ENCODE measurements at regions of chr11 and their contacts with region 1.

Region 1: DNA sequence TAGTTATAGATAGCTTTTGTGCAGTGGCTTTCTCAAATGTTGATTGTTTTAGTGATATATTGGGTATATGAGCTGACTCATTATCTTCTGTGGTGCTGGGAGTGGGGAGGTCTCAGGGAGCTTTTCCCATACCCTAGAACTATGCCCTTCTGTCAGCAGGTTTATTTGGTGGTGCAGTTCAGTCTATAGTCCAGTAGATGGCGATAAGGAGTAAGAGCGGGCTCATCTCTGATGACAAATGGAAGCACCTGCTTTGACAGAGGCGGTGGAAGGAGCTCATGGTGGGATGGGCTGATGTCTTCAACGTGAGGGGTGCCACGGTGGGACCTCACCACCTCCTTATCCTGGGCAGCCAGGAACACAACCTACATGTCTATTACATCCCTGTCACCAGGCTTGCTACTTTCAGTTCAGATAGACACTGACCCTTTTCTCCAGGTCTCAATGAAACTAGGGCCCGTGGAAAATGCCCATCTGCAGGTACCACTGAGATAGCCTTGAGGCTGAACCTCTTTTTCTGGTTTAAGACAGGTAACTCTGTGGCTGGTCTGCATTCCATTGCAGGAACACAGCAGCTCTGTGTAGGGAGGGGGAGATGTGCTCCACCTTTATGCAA is 13.0 kb upstream of the OR6A2 start:
- DNase-seq: peak; percentile 28
- H3K4me3 ChIP-seq: no peak overlapping the region
- H3K27ac ChIP-seq: no peak overlapping the region
- H3K4me1 ChIP-seq: no peaks in the 10 kb centered on the region
- H3K27me3 ChIP-seq: no peaks in the 10 kb centered on the region
- CTCF ChIP-seq: peak; percentile 91 to 92

Region 2: DNA sequence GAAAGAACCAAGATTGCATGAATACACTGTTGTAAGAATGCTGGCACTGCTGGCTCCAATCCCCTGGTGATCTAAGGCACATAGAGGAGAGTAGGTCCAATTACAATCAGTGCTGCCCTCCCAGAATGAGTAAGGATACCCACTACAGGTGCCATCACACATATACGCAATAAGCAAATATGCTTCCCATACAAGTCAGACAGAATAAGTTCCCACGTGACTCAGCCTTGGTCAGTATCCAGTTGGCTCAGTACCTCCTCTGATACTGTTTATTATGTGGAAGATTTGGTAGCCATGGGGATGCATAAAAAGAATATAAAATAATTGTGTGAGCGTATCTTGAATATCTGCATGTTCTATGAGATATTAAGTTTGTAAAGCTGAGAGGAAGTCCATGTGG is 99.5 kb after region 1 on chr11:
- CTCF ChIA-PET with region 1: no interaction called
- dilution Hi-C with region 1: no loop called
- in situ Hi-C with region 1: no loop called
- intact Hi-C with region 1: no loop called
- DNase-seq: peak; percentile 37
- H3K4me3 ChIP-seq: no peak overlapping the region
- H3K27ac ChIP-seq: no peak overlapping the region
- H3K4me1 ChIP-seq: no peaks in the 10 kb centered on the region
- H3K27me3 ChIP-seq: no peaks in the 10 kb centered on the region
- CTCF ChIP-seq: no peak

Region 3: DNA sequence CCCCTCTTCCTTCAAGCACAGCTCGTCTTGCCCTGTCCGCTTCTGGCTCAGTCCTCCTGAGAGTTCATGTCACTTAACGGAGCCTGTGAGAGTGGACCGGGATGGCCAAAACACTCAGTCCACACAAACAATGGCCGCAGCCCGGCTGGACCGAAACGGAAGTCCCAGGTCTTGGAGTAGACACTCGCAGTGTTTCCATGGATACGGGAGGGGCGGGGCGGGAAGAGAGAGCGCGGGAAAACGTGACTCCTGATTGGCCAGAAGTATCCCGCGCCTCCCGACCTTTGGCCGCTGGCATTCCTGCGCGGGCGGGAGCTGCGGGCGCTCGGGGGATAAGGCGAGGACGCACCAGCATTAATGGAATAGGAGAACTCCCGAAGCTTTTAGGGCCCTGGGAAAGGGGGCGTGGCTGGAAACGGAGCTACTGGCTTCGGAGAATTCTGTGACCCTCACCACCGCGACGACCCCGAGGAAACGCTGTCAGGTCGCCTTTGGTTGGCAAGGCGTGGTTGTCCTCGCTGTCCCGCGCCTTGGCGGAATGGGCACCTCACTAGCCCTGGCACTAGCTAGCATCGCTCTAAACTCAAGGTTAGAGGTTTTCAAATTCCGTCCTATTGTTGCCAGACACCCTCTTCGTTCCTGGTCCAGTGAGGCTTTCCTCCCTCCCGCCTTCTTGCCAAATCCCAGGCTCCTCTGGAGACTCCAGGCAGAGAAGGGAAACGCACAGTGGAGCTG is 207.9 kb after region 1 on chr11 and contains the starts of genes NLRP14 and ZNF214:
- CTCF ChIA-PET with region 1: interaction called, 4 read pairs
- dilution Hi-C with region 1: no loop called
- in situ Hi-C with region 1: no loop called
- intact Hi-C with region 1: loop called (anchors 1 kb)
- DNase-seq: peak; percentile 88
- H3K4me3 ChIP-seq: peak within 1 kb of the TSS; percentile 64 to 77 (median 71)
- H3K27ac ChIP-seq: peak within 1 kb of the TSS; percentile 79
- H3K4me1 ChIP-seq: peaks cover 9% of the 10 kb centered on the region
- H3K27me3 ChIP-seq: no peaks in the 10 kb centered on the region
- CTCF ChIP-seq: no peak
- total RNA-seq, gene NLRP14: 0.14 to 0.33 TPM
- total RNA-seq, gene ZNF214: 3.0 to 5.2 TPM

Region 4: GRCh38 chr11:7278314-7278917 is 465.9 kb after region 1 on chr11:
- CTCF ChIA-PET with region 1: no interaction called
- dilution Hi-C with region 1: no loop called
- in situ Hi-C with region 1: no loop called
- intact Hi-C with region 1: loop called (anchors 2 kb)
- DNase-seq: peak; percentile 15
- H3K4me3 ChIP-seq: no peak overlapping the region
- H3K27ac ChIP-seq: no peak overlapping the region
- H3K4me1 ChIP-seq: peaks cover 5% of the 10 kb centered on the region
- H3K27me3 ChIP-seq: no peaks in the 10 kb centered on the region
- CTCF ChIP-seq: peak; percentile 68 to 78

Measured in mammary epithelial cell (primary cell).